ENCODE measurements at regions of chr1 and their contacts with region 1.

Region 1: DNA sequence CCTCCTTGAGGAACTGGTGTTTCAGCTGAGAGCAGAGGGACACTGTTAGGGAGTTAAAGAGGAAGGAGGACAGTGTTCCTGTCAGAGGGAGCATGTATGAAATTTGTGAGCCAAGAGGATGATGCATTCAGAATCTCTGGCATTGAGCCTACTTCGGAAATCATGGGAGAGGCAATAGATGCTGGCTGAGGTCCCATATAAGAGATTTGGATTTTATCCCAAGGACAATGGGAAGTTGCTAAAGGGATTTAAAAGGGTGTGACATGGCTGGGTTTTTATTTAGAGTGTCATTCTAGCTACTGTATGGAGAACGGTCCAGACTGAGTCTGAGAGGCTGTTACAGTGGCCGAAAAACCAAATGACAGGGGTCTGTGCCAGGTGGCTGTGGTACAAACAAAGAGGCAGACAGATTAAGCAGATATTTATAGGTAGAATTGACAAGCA is 403.2 kb upstream of the B3GALT2 start:
- DNase-seq: no peak
- H3K4me3 ChIP-seq: no peak overlapping the region
- H3K4me3 Mint-ChIP-seq: no peak overlapping the region
- H3K27ac ChIP-seq: peak overlapping the region in 1 of 2 donors; percentile 49
- H3K27ac Mint-ChIP-seq: peak overlapping the region in 4 of 7 donors; percentile 44 to 88 (median 81)
- H3K4me1 ChIP-seq: peaks cover 38 to 43% of the 10 kb centered on the region in 2 donors
- H3K4me1 Mint-ChIP-seq: peaks cover 52% of the 10 kb centered on the region
- H3K27me3 ChIP-seq: no peaks in the 10 kb centered on the region
- H3K27me3 Mint-ChIP-seq: no peaks in the 10 kb centered on the region
- CTCF ChIP-seq: no peak

Region 2: DNA sequence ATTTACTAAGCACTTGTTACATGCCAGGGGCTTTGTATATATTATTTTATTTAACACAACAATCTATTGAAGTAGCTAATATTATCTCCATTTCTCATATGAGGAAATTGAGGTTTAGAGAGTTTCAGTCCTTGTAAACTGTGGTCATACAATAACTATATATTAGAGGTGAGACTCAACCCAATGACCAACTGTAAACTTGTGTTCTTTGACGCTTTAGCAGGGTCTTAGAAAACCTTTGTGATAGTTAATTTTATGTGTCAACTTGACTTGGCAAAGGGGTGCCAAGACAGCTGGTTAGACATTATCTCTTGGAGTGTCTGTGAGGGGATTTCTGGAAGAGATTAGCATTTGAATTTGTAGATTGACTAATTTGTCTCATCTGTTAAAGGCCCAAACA is 150.8 kb before region 1 on chr1:
- intact Hi-C with region 1: no loop called
- DNase-seq: no peak
- H3K4me3 ChIP-seq: no peak overlapping the region
- H3K4me3 Mint-ChIP-seq: no peak overlapping the region
- H3K27ac ChIP-seq: no peak overlapping the region
- H3K27ac Mint-ChIP-seq: no peak overlapping the region
- H3K4me1 ChIP-seq: no peaks in the 10 kb centered on the region
- H3K4me1 Mint-ChIP-seq: no peaks in the 10 kb centered on the region
- H3K27me3 ChIP-seq: no peaks in the 10 kb centered on the region
- H3K27me3 Mint-ChIP-seq: peaks cover 0 to 2% (median 0%) of the 10 kb centered on the region in 3 donors
- CTCF ChIP-seq: no peak

Region 3: DNA sequence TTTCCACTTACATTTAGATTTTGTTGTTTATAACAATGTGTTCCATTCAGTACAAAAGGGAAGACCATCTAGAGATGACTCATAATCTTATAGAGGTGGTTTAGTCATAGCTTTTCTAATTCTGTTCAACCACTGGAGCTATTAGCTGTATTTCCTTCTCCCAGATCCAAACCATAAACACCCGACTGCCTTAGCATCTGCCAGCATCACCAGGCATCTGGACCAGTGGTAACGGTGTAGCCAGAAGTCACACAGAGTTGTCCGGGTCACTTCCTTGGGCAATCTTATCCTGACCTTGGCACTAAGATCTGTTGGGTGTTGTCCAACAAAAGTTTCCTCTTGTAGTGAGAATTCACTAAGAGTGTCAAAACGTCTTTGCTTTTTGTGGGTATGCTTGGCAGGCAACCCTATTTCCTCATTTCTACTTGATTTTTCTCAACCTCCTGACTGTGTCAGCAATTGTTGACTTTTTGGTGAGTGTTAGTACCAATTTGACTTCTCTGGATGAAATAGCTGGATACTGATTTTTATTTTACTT is 31.1 kb before region 1 on chr1:
- intact Hi-C with region 1: loop called in 1 of 2 experiments (anchors 5 kb)
- DNase-seq: peak; percentile 74 to 89 (median 86)
- H3K4me3 ChIP-seq: peak overlapping the region in 1 of 3 experiments; percentile 9
- H3K4me3 Mint-ChIP-seq: peak overlapping the region in 1 of 2 donors; percentile 68
- H3K27ac ChIP-seq: peak overlapping the region; percentile 72 to 77
- H3K27ac Mint-ChIP-seq: peak overlapping the region; percentile 86 to 96 (median 93)
- H3K4me1 ChIP-seq: peaks cover 20 to 27% of the 10 kb centered on the region in 2 donors
- H3K4me1 Mint-ChIP-seq: peaks cover 30% of the 10 kb centered on the region
- H3K27me3 ChIP-seq: no peaks in the 10 kb centered on the region
- H3K27me3 Mint-ChIP-seq: no peaks in the 10 kb centered on the region
- CTCF ChIP-seq: no peak

Measured in CD14-positive monocyte (primary cell).